ENCODE measurements at regions of chr2 and their contacts with region 1.

Region 1: GRCh38 chr2:25606892-25607291 is 66.5 kb downstream of the DTNB start:
- DNase-seq: no peak
- H3K4me3 Mint-ChIP-seq: no peak overlapping the region
- H3K27ac Mint-ChIP-seq: no peak overlapping the region
- H3K4me1 Mint-ChIP-seq: peaks cover 6% of the 10 kb centered on the region
- H3K27me3 Mint-ChIP-seq: no peaks in the 10 kb centered on the region

Region 2: GRCh38 chr2:25596516-25597244 is 10.2 kb before region 1 on chr2:
- CTCF ChIA-PET with region 1: interaction called, 12 read pairs
- POLR2A ChIA-PET with region 1: no interaction called
- intact Hi-C with region 1: no loop called
- DNase-seq: no peak
- H3K4me3 Mint-ChIP-seq: no peak overlapping the region
- H3K27ac Mint-ChIP-seq: no peak overlapping the region
- H3K4me1 Mint-ChIP-seq: peaks cover 33% of the 10 kb centered on the region
- H3K27me3 Mint-ChIP-seq: no peaks in the 10 kb centered on the region

Region 3: DNA sequence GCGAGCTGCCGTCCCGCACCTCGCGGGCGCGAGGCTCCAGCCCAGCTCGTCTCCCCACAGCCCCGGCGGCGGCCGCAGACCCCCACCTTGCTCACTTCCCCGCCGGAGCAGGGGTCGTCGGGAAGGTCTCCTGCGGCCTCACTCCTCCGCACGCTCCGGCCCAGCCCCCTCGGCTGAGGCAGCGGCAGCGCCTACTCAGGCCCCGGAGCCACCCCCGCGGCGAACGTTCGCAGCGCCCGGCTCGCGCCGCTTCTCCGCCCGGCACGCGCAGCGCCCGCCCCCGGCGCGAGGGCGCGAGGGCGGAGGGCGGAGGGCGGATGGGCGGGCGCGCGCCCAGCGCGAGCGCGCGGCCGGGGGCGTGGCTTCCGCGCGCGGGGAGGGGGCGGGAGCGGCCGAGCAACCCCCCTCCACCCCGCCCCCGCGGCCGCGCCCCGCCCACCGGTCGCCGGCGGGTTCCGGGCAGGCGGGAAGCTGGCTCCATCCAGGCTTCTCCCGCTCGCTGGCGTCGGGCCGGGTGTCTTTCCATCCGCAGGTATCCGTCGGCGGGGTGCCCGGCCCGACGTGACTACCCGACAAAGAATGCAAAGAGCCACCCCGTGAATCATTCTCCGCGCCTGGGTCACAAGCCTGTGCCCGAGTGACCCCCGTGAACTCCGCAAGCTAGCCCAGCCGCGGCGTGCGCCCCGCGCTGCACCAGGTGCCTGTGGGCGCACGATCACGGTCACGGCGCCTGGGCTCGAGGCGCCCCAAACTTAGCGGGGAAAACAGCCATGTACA is 66.6 kb after region 1 on chr2 and contains the start of gene DTNB:
- CTCF ChIA-PET with region 1: interaction called, 10 read pairs
- POLR2A ChIA-PET with region 1: interaction called, 3 read pairs
- intact Hi-C with region 1: no loop called
- DNase-seq: peak; percentile 85
- H3K4me3 Mint-ChIP-seq: peak within 1 kb of the TSS; percentile 80
- H3K27ac Mint-ChIP-seq: peak within 1 kb of the TSS; percentile 62
- H3K4me1 Mint-ChIP-seq: peaks cover 27% of the 10 kb centered on the region
- H3K27me3 Mint-ChIP-seq: no peaks in the 10 kb centered on the region
- total RNA-seq, gene DTNB: 20.8 to 25.1 TPM

Region 4: DNA sequence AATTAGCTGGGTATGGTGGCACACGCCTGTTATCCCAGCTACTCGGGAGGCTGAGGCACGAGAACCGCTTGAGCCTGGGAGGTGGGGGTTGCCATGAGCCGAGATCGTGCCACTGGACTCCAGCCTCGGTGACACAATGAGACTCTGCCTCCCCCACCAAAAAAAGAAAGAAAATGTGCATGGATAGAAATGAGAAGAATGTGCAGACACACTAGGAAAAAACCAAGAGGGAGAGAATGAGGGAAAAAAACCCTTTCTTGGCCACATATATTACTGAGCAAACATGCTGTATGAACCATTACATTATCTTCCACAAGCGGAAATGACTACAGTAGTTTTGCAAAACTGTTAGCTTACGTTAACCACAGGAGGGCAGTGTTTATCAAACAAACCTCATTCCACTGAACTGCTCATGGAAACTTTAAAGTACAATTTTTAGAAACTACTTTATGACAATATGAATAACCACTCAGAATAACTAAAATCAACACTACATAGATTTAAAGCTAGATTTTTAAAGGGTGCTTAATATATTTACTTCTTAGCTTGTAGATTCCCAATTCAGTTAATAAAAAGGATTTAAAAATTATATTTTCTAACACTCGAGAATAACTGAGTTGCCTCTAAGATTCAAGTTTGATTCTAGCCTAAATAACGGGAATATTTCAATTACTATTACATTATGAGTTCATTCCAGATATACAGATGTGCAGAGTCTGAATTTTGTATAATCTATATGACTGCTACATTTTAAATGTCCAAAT is 245.0 kb after region 1 on chr2:
- CTCF ChIA-PET with region 1: interaction called, 25 read pairs
- POLR2A ChIA-PET with region 1: no interaction called
- intact Hi-C with region 1: loop called (anchors 10 kb)
- DNase-seq: peak; percentile 38
- H3K4me3 Mint-ChIP-seq: peak overlapping the region; percentile 53
- H3K27ac Mint-ChIP-seq: peak overlapping the region; percentile 78
- H3K4me1 Mint-ChIP-seq: peaks cover 51% of the 10 kb centered on the region
- H3K27me3 Mint-ChIP-seq: no peaks in the 10 kb centered on the region

Region 5: GRCh38 chr2:26144953-26145680 is 538.2 kb after region 1 on chr2:
- CTCF ChIA-PET with region 1: interaction called, 3 read pairs
- POLR2A ChIA-PET with region 1: no interaction called
- intact Hi-C with region 1: loop called (anchors 10 kb)
- DNase-seq: peak; percentile 78
- H3K4me3 Mint-ChIP-seq: no peak overlapping the region
- H3K27ac Mint-ChIP-seq: no peak overlapping the region
- H3K4me1 Mint-ChIP-seq: peaks cover 2% of the 10 kb centered on the region
- H3K27me3 Mint-ChIP-seq: peaks cover 13% of the 10 kb centered on the region